ENCODE measurements at regions of chr11 and their contacts with region 1.

Region 1: GRCh38 chr11:13462901-13463778 is at the start of gene BTBD10:
- DNase-seq: peak; percentile 93
- H3K4me3 ChIP-seq: peak within 1 kb of the TSS; percentile 72 to 97 (median 84)
- H3K27ac ChIP-seq: peak within 1 kb of the TSS; percentile 80
- H3K4me1 ChIP-seq: peaks cover 28% of the 10 kb centered on the region
- H3K27me3 ChIP-seq: no peaks in the 10 kb centered on the region
- CTCF ChIP-seq: no peak
- total RNA-seq, gene BTBD10: 57.2 to 73.2 TPM

Region 2: GRCh38 chr11:13189561-13190426 is 273.3 kb before region 1 on chr11:
- CTCF ChIA-PET with region 1: interaction called, 16 read pairs
- dilution Hi-C with region 1: no loop called
- in situ Hi-C with region 1: no loop called
- intact Hi-C with region 1: no loop called
- DNase-seq: no peak
- H3K4me3 ChIP-seq: no peak overlapping the region
- H3K27ac ChIP-seq: no peak overlapping the region
- H3K4me1 ChIP-seq: no peaks in the 10 kb centered on the region
- H3K27me3 ChIP-seq: no peaks in the 10 kb centered on the region
- CTCF ChIP-seq: no peak

Region 3: DNA sequence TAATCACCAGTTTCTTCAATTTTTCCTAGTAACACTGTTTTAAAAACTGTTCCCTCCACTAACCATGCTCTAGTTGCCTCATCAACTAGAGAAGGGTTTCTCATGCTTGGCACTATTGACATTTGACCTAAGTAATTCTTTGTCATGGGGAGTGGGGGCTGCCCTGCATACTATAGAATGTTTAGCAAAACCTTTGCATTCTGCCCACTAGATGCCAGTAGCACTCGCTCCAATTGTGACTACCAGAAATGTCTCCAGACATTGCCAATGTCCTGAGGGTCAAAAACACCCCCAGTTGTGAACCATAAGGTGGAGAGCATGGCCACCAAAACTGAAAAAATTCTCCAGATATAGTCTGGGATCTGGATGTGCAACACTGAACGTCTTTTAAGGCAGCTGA is 213.1 kb before region 1 on chr11:
- CTCF ChIA-PET with region 1: interaction called, 6 read pairs
- dilution Hi-C with region 1: no loop called
- in situ Hi-C with region 1: no loop called
- intact Hi-C with region 1: loop called (anchors 5 kb)
- DNase-seq: peak; percentile 20
- H3K4me3 ChIP-seq: no peak overlapping the region
- H3K27ac ChIP-seq: no peak overlapping the region
- H3K4me1 ChIP-seq: no peaks in the 10 kb centered on the region
- H3K27me3 ChIP-seq: no peaks in the 10 kb centered on the region
- CTCF ChIP-seq: peak; percentile 35 to 69

Region 4: GRCh38 chr11:13384908-13385640 is 78.1 kb before region 1 on chr11:
- CTCF ChIA-PET with region 1: no interaction called
- dilution Hi-C with region 1: no loop called
- in situ Hi-C with region 1: no loop called
- intact Hi-C with region 1: loop called (anchors 5 kb)
- DNase-seq: peak; percentile 22
- H3K4me3 ChIP-seq: no peak overlapping the region
- H3K27ac ChIP-seq: no peak overlapping the region
- H3K4me1 ChIP-seq: no peaks in the 10 kb centered on the region
- H3K27me3 ChIP-seq: no peaks in the 10 kb centered on the region
- CTCF ChIP-seq: peak; percentile 67 to 68

Region 5: GRCh38 chr11:13550761-13551160 is 87.6 kb after region 1 on chr11:
- CTCF ChIA-PET with region 1: no interaction called
- dilution Hi-C with region 1: no loop called
- in situ Hi-C with region 1: no loop called
- intact Hi-C with region 1: no loop called
- DNase-seq: no peak
- H3K4me3 ChIP-seq: no peak overlapping the region
- H3K27ac ChIP-seq: no peak overlapping the region
- H3K4me1 ChIP-seq: no peaks in the 10 kb centered on the region
- H3K27me3 ChIP-seq: no peaks in the 10 kb centered on the region
- CTCF ChIP-seq: no peak

Region 6: GRCh38 chr11:13620063-13620462 is 156.9 kb after region 1 on chr11:
- CTCF ChIA-PET with region 1: no interaction called
- dilution Hi-C with region 1: no loop called
- in situ Hi-C with region 1: no loop called
- intact Hi-C with region 1: no loop called
- DNase-seq: no peak
- H3K4me3 ChIP-seq: no peak overlapping the region
- H3K27ac ChIP-seq: no peak overlapping the region
- H3K4me1 ChIP-seq: no peaks in the 10 kb centered on the region
- H3K27me3 ChIP-seq: no peaks in the 10 kb centered on the region
- CTCF ChIP-seq: no peak

Region 7: DNA sequence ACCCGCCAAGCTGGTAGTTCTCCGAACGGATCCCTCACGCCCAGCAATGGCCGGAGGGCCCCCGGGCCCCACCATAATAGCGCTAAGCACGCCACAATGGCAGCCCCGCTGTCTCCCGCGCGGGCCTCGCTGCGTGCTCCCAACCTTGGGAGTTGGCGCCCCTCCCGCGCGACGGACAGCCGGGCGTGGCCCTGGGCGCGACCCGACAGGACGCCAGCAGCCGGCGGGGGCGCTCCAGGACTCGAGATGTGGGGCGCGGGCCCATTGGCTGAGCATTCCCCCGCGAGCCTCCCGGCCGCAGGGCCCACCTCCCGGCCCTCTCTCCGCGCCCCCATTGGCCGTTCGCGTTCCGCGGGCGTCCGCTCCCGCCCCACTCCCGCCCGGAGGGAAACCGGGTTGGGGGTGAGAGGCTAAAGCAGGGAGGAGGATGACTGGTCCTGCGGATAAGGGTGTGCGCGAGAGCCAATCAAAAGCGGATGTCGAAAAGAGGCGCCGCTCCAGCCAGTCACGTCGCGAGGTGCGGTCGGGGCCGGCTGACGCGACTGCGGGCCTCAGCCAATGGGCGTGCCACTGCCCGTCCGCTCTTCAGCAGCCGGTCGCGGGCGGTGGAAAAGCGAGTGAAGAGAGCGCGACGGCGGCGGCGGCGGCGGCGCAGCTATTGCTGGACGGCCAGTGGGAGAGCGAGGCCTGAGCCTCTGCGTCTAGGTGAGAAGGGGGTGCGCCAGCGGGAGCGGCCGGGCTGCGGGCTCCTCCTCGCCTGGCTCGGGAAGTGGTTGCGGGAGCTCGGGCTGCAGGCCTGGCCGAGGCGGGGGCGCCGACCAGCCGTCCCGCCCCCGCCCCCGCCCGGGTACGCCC is 205.2 kb after region 1 on chr11 and contains the start of gene FAR1:
- CTCF ChIA-PET with region 1: no interaction called
- dilution Hi-C with region 1: no loop called
- in situ Hi-C with region 1: no loop called
- intact Hi-C with region 1: loop called (anchors 5 kb)
- DNase-seq: peak; percentile 100
- H3K4me3 ChIP-seq: peak within 1 kb of the TSS; percentile 75 to 100 (median 81)
- H3K27ac ChIP-seq: peak within 1 kb of the TSS; percentile 83
- H3K4me1 ChIP-seq: peaks cover 48% of the 10 kb centered on the region
- H3K27me3 ChIP-seq: no peaks in the 10 kb centered on the region
- CTCF ChIP-seq: peak; percentile 24 to 59
- total RNA-seq, gene FAR1: 104 to 126 TPM

Region 8: GRCh38 chr11:14764579-14765527 is 1301.7 kb after region 1 on chr11:
- CTCF ChIA-PET with region 1: no interaction called
- dilution Hi-C with region 1: no loop called
- in situ Hi-C with region 1: no loop called
- intact Hi-C with region 1: no loop called
- DNase-seq: peak; percentile 78
- H3K4me3 ChIP-seq: no peak overlapping the region
- H3K27ac ChIP-seq: no peak overlapping the region
- H3K4me1 ChIP-seq: no peaks in the 10 kb centered on the region
- H3K27me3 ChIP-seq: peaks cover 9% of the 10 kb centered on the region
- CTCF ChIP-seq: no peak